AG04449 (cell line): ENCODE measurements at regions of chr2 and their contacts with region 1.

Region 1: DNA sequence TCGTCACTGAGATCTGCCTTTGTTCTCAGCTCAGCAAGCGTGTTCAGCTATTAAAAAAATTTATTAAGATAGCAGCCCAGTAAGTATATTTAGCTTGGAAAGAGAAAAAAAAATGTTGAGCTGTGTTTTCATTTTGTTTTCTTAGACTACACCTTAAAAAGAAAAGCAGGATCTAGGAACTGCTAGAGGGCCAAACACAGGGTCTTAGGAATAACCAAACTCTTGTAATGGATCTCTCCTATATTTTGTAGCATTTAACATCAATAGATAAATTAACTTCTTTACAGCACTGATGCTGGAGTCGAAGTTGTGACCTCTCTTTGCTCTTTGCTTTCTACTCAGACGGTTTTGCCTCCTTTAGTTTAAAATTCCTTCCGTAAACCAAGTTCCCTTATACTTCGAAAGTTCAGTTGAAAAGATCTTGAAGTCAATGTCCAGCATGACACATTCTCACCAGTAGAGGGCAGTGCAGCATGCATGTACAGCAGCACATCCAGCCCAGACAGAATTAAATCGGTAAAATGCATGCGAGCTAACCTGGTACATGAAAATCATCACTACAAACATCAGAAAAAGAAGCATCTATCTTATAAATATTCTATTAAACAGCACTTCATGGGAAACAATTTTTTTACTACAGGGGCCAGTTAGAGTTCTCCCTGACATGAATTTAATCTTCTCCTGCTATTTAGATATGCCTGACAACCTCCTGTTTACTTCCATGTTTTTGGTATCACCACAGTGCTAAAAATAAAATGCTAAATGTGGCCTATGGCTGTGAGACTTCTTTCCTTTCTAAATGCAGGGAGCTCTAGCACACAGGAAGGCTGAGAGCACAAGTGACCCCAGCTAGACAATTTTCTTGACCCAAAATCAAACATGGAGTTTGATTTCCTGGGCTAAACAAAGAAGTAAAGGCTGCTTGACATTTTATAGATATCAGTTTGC is 48.2 kb upstream of the MAP3K20 start:
- DNase-seq: no peak
- H3K4me3 ChIP-seq: no peak overlapping the region
- CTCF ChIP-seq: peak; percentile 76

Region 2: GRCh38 chr2:172995323-172996244 is 31.9 kb before region 1 on chr2:
- CTCF ChIA-PET with region 1: interaction called, 38 read pairs
- POLR2A ChIA-PET with region 1: no interaction called
- DNase-seq: peak; percentile 92
- H3K4me3 ChIP-seq: no peak overlapping the region
- CTCF ChIP-seq: peak; percentile 54

Region 3: GRCh38 chr2:173048897-173049661 is 21.6 kb after region 1 on chr2:
- CTCF ChIA-PET with region 1: interaction called, 74 read pairs
- POLR2A ChIA-PET with region 1: interaction called, 3 read pairs
- DNase-seq: peak; percentile 90
- H3K4me3 ChIP-seq: no peak overlapping the region; the same call in 1 of the 2 replicates
- CTCF ChIP-seq: no peak

Region 4: GRCh38 chr2:173109253-173110188 is 82.1 kb after region 1 on chr2:
- CTCF ChIA-PET with region 1: interaction called, 12 read pairs
- POLR2A ChIA-PET with region 1: no interaction called
- DNase-seq: peak; percentile 71
- H3K4me3 ChIP-seq: no peak overlapping the region
- CTCF ChIP-seq: no peak

Region 5: GRCh38 chr2:173199294-173199693 is 171.8 kb after region 1 on chr2:
- CTCF ChIA-PET with region 1: interaction called, 39 read pairs
- POLR2A ChIA-PET with region 1: no interaction called
- DNase-seq: no peak
- H3K4me3 ChIP-seq: no peak overlapping the region
- CTCF ChIP-seq: no peak

Region 6: GRCh38 chr2:173239644-173240043 is 212.2 kb after region 1 on chr2:
- CTCF ChIA-PET with region 1: interaction called, 10 read pairs
- POLR2A ChIA-PET with region 1: no interaction called
- DNase-seq: no peak
- H3K4me3 ChIP-seq: no peak overlapping the region
- CTCF ChIP-seq: no peak